ENCODE measurements at regions of chr10 and their contacts with region 1.

Region 1: DNA sequence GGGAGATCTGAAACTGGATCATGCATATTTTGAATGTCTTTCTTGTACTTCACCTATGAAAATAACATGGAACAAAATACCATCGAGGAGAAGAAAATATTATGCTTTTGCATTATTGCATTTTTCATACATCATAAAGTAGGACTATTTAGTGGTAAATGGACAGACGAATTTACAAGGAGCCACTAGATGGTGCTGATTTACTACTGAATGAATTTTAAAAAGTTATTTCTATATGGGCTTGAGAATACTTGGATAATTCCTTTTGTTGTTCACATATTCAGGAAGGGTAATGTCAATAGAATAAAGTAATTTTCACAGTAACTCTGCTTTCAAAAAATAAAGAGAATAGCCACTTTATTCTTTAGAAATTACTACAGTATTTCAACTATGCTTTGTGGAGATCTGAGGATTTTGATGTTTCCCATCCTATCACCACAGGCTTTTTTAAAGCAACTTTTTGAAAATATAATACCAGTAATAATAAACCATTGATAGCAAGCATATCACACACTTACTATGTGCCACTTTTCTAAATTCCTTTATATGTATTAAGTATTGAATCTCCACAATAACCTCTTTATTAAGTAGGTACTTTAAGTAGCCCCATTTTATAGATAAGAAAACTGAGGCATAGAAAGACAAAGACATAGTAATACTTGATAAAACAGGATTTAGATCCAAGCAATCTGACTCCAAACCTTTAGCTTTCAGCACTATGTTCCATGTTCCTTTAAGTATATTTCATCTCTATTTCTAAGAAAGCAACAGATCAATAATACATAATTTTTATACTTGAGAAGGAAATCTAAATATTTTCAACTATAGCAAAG is 38.6 kb downstream of the NEBL start:
- DNase-seq: no peak
- CTCF ChIP-seq: peak; percentile 49

Region 2: GRCh38 chr10:21265621-21266020 is 407.1 kb after region 1 on chr10:
- in situ Hi-C with region 1: loop called (anchors 25 kb)
- DNase-seq: no peak
- CTCF ChIP-seq: no peak

Region 3: DNA sequence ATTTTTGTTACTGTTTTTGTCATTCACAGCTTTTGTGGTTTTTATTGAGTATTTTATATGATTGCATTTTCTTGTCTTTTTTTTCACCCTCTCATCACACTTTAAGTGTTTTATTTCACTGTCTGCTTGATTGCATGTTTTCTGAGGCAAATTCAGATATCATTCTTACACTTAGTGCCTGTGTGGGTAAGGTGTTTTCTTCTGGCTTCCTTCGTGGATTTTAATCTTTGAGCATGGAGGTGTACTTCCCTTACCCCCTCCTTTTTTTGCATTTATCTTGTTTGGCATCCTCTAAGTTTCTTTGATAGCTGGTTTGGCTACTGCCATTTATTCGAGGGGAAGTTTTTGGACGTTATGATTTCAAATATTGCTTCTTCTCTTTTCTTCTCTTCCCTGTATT is 803.4 kb after region 1 on chr10:
- in situ Hi-C with region 1: no loop called
- DNase-seq: no peak
- CTCF ChIP-seq: no peak

Measured in GM13977 (cell line).